ENCODE measurements at regions of chr14 and their contacts with region 1.

Region 1: DNA sequence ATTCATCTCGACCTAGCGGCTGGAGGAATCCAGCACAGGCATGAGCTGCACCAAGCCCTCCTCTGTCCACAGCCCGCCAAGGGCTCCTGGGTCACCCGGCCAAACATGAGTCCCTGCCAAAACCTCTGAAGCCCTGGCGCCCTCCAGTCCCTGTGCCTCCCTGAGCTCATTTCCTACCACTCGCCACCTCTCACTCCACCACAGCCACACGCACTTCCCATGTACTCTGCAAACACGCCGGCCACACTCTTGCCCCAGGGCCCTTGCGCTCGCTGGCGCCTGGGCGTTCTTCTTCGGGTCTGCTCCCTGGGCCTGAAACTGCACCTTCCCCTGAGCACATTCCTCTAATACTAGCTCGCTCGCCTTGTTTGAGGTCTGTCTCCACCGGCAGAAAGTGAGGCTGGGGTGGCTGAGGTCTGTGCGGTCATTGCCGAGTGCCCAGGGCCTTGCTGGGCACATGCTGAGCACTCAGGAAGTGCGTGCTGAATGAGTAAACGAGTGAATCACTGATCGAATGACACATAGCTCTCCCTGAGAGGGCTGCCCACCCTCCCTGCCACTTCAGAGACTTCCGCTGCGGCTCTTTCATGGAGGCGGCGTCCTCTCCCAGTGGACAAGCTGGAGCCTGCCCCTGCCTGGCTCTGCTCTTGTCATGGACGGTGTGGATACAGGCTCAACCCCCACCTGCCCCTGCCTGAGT is 33.7 kb upstream of the DLK1 start:
- DNase-seq: peak; percentile 98
- H3K4me3 ChIP-seq: peak overlapping the region in 1 of 3 experiments; percentile 41
- H3K27ac ChIP-seq: peak overlapping the region; percentile 72
- H3K4me1 ChIP-seq: peaks cover 45% of the 10 kb centered on the region
- H3K27me3 ChIP-seq: no peaks in the 10 kb centered on the region
- CTCF ChIP-seq: no peak

Region 2: GRCh38 chr14:100747021-100747586 is 54.1 kb after region 1 on chr14:
- CTCF ChIA-PET with region 1: no interaction called
- dilution Hi-C with region 1: no loop called
- in situ Hi-C with region 1: no loop called
- intact Hi-C with region 1: loop called (anchors 2 kb)
- DNase-seq: peak; percentile 95
- H3K4me3 ChIP-seq: no peak overlapping the region
- H3K27ac ChIP-seq: peak overlapping the region; percentile 59
- H3K4me1 ChIP-seq: peaks cover 5% of the 10 kb centered on the region
- H3K27me3 ChIP-seq: no peaks in the 10 kb centered on the region
- CTCF ChIP-seq: no peak